ENCODE measurements at regions of chr5 and their contacts with region 1.

Region 1: GRCh38 chr5:96336351-96336985 is 96.6 kb downstream of the PCSK1 start:
- DNase-seq: no peak
- ATAC-seq: peak; percentile 92
- H3K4me3 ChIP-seq: no peak overlapping the region
- H3K27ac ChIP-seq: no peak overlapping the region
- H3K4me1 ChIP-seq: peaks cover 27% of the 10 kb centered on the region
- H3K27me3 ChIP-seq: no peaks in the 10 kb centered on the region; a peak in 1 of 4 replicates
- CTCF ChIP-seq: peak; percentile 87 to 92 (median 88)
- EP300 ChIP-seq: no peak
- POLR2A ChIP-seq: no peak
- RAD21 ChIP-seq: peak; percentile 96

Region 2: DNA sequence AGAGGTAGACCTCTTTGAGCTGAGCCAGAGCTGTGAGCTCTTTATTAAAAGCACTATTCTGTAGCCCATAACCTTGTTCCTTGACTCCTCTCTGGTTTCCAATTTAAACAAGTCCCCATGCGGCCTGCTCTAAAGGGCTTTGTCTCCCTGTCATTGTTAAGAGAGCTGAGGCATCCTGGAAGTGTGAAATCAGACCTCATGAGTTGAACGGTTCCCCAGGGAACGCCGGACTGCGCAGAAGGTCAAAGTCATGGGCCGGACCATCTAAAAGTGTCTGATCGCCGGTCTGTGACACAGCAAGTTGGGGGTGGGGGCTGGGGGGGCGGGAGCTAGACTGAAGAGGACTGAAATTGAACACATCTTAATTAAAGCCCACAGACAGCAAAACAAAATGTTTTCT is 1452.2 kb before region 1 on chr5:
- CTCF ChIA-PET with region 1: no interaction called
- POLR2A ChIA-PET with region 1: no interaction called
- RAD21 ChIA-PET with region 1: no interaction called
- SMC1A ChIA-PET with region 1: no interaction called
- in situ Hi-C with region 1: no loop called
- intact Hi-C with region 1: no loop called
- DNase-seq: no peak
- ATAC-seq: no peak
- H3K4me3 ChIP-seq: no peak overlapping the region
- H3K27ac ChIP-seq: no peak overlapping the region
- H3K4me1 ChIP-seq: no peaks in the 10 kb centered on the region
- H3K27me3 ChIP-seq: no peaks in the 10 kb centered on the region
- CTCF ChIP-seq: no peak
- EP300 ChIP-seq: no peak
- POLR2A ChIP-seq: no peak
- RAD21 ChIP-seq: no peak

Region 3: GRCh38 chr5:95786901-95787300 is 549.6 kb before region 1 on chr5:
- CTCF ChIA-PET with region 1: interaction called, 16 read pairs
- POLR2A ChIA-PET with region 1: no interaction called
- RAD21 ChIA-PET with region 1: interaction called, 3 read pairs
- SMC1A ChIA-PET with region 1: interaction called, 11 read pairs
- in situ Hi-C with region 1: no loop called
- intact Hi-C with region 1: loop called (anchors 5 kb)
- DNase-seq: no peak
- ATAC-seq: no peak
- H3K4me3 ChIP-seq: no peak overlapping the region
- H3K27ac ChIP-seq: no peak overlapping the region
- H3K4me1 ChIP-seq: no peaks in the 10 kb centered on the region
- H3K27me3 ChIP-seq: no peaks in the 10 kb centered on the region
- CTCF ChIP-seq: no peak
- EP300 ChIP-seq: no peak
- POLR2A ChIP-seq: no peak
- RAD21 ChIP-seq: no peak

Region 4: DNA sequence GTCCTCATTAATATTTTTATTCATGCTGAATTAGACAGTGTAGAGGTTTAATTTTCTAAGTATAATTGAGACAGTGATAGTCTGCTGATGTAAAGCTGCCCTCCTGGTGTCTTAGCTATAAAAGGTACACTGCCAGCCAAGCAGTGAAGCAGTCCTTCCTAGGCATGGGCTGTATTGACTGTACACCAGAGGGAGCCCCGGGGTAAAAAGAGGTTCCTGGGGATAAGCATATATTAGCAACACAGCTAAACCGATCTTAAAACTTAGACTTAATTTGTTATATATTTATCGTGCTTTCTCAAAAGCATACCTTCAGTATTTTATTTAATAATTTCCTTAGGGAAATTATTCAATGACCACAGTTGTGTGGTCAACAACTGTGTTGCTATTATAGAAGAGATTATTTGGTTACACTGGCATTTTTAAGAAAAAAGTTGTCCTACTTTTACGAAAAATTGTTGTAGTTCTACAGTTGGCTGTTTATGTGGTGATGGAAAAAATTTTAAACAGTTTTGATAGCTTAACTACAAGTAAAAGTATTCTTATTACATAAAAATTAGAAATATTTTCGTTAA is 443.6 kb before region 1 on chr5:
- CTCF ChIA-PET with region 1: interaction called, 87 read pairs
- POLR2A ChIA-PET with region 1: interaction called, 3 read pairs
- RAD21 ChIA-PET with region 1: interaction called, 54 read pairs
- SMC1A ChIA-PET with region 1: interaction called, 55 read pairs
- in situ Hi-C with region 1: no loop called
- intact Hi-C with region 1: loop called (anchors 1 kb)
- DNase-seq: no peak
- ATAC-seq: peak; percentile 94
- H3K4me3 ChIP-seq: no peak overlapping the region
- H3K27ac ChIP-seq: no peak overlapping the region
- H3K4me1 ChIP-seq: no peaks in the 10 kb centered on the region
- H3K27me3 ChIP-seq: no peaks in the 10 kb centered on the region
- CTCF ChIP-seq: peak; percentile 57 to 62 (median 57)
- EP300 ChIP-seq: no peak
- POLR2A ChIP-seq: no peak
- RAD21 ChIP-seq: peak; percentile 81

Region 5: DNA sequence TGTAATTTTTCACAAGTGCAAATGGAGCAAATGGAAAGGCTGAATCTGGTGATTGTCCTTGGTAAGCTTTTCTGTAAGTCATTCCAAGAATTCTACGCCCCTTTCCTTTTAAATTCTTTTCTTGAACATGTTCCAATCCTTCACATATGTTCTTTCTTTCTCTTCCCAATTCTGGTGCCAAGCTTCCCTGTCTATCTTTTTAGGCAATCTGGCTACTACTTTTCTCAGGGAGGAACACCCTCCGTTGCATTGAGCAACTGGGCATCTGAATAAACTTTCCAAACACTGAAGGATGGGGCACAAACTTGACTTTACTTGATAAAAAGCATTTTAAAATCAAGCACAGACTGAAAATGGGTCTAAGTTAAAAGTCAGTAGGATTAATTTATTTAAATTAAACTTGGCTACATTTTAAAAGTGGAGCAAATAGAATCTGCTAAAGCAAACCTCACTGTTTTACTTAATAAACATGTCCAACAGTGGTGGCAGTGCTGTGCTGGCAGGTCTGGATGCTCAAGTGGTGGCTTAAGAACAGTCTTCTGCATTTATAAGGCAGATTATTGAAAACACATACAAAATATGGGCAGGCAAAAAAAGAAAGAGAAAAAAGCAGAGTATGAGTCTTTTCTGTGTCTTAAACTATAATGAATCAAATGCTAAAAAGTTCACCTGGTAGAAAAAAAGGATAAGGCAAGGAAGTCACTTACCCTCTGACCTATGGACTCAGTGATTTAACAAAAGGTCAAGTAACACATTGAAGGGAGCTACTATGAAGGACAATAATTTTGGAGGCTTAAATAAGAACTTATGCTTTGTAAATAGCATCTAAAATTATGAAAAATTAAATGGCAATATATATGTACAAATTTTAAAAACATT is 380.2 kb before region 1 on chr5:
- CTCF ChIA-PET with region 1: interaction called, 29 read pairs
- POLR2A ChIA-PET with region 1: no interaction called
- RAD21 ChIA-PET with region 1: interaction called, 63 read pairs
- SMC1A ChIA-PET with region 1: interaction called, 61 read pairs
- in situ Hi-C with region 1: loop called (anchors 5 kb)
- intact Hi-C with region 1: loop called (anchors 1 kb)
- DNase-seq: no peak
- ATAC-seq: peak; percentile 10; the same call in 1 of the 3 replicates
- H3K4me3 ChIP-seq: peak overlapping the region; percentile 46; the same call in 1 of the 2 replicates
- H3K27ac ChIP-seq: peak overlapping the region; percentile 6; the same call in 1 of the 2 replicates
- H3K4me1 ChIP-seq: 0 out of 2 replicates have a peak, but pooled peaks cover 3% of the 10 kb centered on the region
- H3K27me3 ChIP-seq: no peaks in the 10 kb centered on the region
- CTCF ChIP-seq: no peak
- EP300 ChIP-seq: no peak
- POLR2A ChIP-seq: no peak
- RAD21 ChIP-seq: no peak

Region 6: DNA sequence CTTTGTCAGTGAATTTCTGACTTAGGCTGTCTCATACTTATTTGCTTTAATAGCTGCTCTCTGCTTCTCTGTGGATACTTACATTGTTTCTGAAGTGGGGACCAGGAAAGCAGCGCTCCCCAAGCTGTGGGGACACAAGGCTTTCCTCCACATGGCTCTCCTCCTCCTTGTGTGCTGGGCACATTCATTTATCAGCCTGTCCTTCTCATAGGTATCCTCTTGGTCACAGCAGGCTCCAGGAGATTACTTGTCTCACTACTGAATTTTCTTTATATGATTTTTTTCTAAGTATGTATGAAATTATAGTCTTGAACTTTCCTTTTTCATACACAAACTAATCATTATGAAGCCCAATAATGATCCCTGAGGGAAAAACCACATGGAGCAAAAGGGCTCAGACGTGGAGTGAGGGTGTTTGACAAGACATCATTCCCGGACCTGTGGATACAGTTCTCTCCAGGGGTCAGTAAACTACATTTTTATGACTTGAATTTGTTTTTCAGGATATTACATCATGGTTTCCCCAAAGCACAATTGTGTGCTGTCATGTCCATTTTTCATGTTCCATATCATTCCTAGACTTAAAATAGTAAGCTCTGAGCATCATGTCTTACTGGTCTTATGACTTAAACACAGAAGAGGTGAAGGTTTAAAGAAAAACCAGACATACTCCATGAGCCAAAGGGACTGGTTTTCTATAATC is 138.0 kb before region 1 on chr5:
- CTCF ChIA-PET with region 1: interaction called, 3 read pairs
- POLR2A ChIA-PET with region 1: no interaction called
- RAD21 ChIA-PET with region 1: interaction called, 4 read pairs
- SMC1A ChIA-PET with region 1: interaction called, 15 read pairs
- in situ Hi-C with region 1: no loop called
- intact Hi-C with region 1: no loop called
- DNase-seq: no peak
- ATAC-seq: no peak
- H3K4me3 ChIP-seq: no peak overlapping the region
- H3K27ac ChIP-seq: no peak overlapping the region
- H3K4me1 ChIP-seq: no peaks in the 10 kb centered on the region
- H3K27me3 ChIP-seq: no peaks in the 10 kb centered on the region
- CTCF ChIP-seq: no peak
- EP300 ChIP-seq: no peak
- POLR2A ChIP-seq: no peak
- RAD21 ChIP-seq: no peak

Region 7: DNA sequence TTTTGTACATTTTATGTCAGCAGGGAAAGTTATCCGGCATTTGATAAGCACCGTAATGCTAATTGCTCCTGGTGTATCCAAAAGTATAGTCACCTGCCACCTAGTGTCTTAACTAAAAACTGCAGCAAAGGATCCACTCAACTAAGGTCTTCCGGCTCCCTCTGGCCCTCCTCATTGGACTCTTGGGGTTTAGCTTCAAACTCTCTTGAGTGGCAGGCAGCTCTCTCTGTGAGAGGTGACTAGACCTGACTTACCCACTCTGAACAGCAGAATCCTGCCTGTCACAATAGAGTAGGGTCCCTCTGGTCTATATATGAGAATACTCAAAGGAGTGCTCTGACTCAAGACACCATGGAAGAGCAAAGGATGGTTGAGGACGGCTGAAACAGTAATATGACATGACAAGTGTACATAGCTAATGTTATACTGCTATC is 265.4 kb after region 1 on chr5:
- CTCF ChIA-PET with region 1: interaction called, 360 read pairs
- POLR2A ChIA-PET with region 1: no interaction called
- RAD21 ChIA-PET with region 1: interaction called, 7 read pairs
- SMC1A ChIA-PET with region 1: interaction called, 9 read pairs
- in situ Hi-C with region 1: no loop called
- intact Hi-C with region 1: no loop called
- DNase-seq: peak; percentile 16
- ATAC-seq: peak; percentile 96
- H3K4me3 ChIP-seq: no peak overlapping the region
- H3K27ac ChIP-seq: no peak overlapping the region
- H3K4me1 ChIP-seq: no peaks in the 10 kb centered on the region
- H3K27me3 ChIP-seq: no peaks in the 10 kb centered on the region
- CTCF ChIP-seq: peak; percentile 71 to 83 (median 77)
- EP300 ChIP-seq: no peak
- POLR2A ChIP-seq: no peak
- RAD21 ChIP-seq: peak; percentile 62

Measured in GM12878 (cell line).